Activated B cell treated with CpG ODN at 0.5 μM for 24 hours (primary cell): ENCODE measurements at regions of chr9 and their contacts with region 1.

Region 1: DNA sequence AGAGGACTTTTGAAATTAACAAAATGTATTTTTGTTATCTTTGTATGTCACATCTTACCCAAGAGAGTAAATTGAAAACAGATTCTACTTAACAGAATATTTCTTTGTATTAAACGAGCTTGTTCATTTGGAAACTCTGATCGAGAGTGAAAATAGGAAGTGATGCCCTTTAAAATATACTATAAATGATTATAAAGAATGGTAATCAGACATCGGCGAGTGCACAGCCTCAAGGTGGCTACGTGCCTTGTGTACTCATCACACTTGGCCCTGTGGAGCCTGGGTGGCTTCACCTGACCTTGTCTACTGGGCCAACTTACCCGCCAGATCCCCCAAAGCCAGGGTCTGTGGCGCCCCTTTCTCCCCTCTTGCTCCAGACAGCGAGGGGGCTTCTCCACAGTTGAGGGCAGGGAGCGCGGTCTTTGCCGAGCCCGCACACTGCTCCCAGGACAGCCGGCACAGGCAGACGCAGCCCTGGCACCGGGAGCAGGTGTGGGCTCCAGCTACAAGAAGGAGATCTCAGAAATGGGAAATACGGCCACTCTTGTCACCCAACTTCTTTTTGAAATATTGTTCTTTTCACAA is 243.2 kb downstream of the CEMIP2 start:
- DNase-seq: no peak
- ATAC-seq: no peak
- H3K4me3 Mint-ChIP-seq: no peak overlapping the region
- H3K27ac Mint-ChIP-seq: no peak overlapping the region
- H3K4me1 Mint-ChIP-seq: no peaks in the 10 kb centered on the region
- H3K27me3 Mint-ChIP-seq: peaks cover 25% of the 10 kb centered on the region
- CTCF ChIP-seq: no peak

Region 2: DNA sequence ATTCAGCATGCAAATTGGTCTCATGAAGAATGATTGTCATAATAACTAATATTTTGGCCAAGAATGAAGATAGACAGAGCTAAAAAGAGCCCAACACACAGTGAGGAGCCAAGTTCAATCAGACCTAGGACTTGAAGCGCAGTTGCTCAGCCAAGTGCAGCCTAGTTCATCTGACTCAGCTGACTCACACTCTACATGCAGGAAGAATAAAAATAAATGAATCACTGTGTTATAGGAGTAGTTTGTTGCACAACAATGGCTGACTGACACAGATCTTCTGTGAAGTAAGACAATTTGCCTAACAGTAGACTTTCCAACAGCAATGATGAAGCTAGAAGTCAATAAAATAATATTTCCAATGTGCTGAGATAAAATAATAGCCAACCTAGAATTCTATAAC is 18.3 kb before region 1 on chr9:
- CTCF ChIA-PET with region 1: no interaction called
- POLR2A ChIA-PET with region 1: no interaction called
- intact Hi-C with region 1: no loop called
- DNase-seq: no peak
- ATAC-seq: no peak
- H3K4me3 Mint-ChIP-seq: no peak overlapping the region
- H3K27ac Mint-ChIP-seq: no peak overlapping the region
- H3K4me1 Mint-ChIP-seq: no peaks in the 10 kb centered on the region
- H3K27me3 Mint-ChIP-seq: peaks cover 3% of the 10 kb centered on the region
- CTCF ChIP-seq: no peak

Region 3: GRCh38 chr9:71587576-71588362 is 62.7 kb after region 1 on chr9:
- CTCF ChIA-PET with region 1: no interaction called
- POLR2A ChIA-PET with region 1: no interaction called
- intact Hi-C with region 1: loop called (anchors 10 kb)
- DNase-seq: no peak
- ATAC-seq: no peak
- H3K4me3 Mint-ChIP-seq: no peak overlapping the region
- H3K27ac Mint-ChIP-seq: no peak overlapping the region
- H3K4me1 Mint-ChIP-seq: no peaks in the 10 kb centered on the region
- H3K27me3 Mint-ChIP-seq: peaks cover 9% of the 10 kb centered on the region
- CTCF ChIP-seq: no peak